Uterus (tissue), 4 donors: ENCODE measurements at regions of chr16 and their contacts with region 1.

Region 1: GRCh38 chr16:11639925-11640899 is 28.0 kb upstream of the SNN start:
- DNase-seq: peak; percentile 88 to 93
- H3K4me3 ChIP-seq: no peak overlapping the region
- H3K27ac ChIP-seq: peak overlapping the region; percentile 88 to 96
- H3K4me1 ChIP-seq: peaks cover 0 to 5% of the 10 kb centered on the region in 2 donors
- H3K27me3 ChIP-seq: no peaks in the 10 kb centered on the region
- CTCF ChIP-seq: no peak
- POLR2A ChIP-seq: peak; percentile 47 to 63

Region 2: GRCh38 chr16:11407047-11407982 is 232.9 kb before region 1 on chr16:
- intact Hi-C with region 1: loop called (anchors 10 kb)
- DNase-seq: peak; percentile 60 to 69
- H3K4me3 ChIP-seq: no peak overlapping the region
- H3K27ac ChIP-seq: no peak overlapping the region
- H3K4me1 ChIP-seq: no peaks in the 10 kb centered on the region
- H3K27me3 ChIP-seq: no peaks in the 10 kb centered on the region
- CTCF ChIP-seq: peak; percentile 53 to 88 (median 62)
- POLR2A ChIP-seq: no peak

Region 3: DNA sequence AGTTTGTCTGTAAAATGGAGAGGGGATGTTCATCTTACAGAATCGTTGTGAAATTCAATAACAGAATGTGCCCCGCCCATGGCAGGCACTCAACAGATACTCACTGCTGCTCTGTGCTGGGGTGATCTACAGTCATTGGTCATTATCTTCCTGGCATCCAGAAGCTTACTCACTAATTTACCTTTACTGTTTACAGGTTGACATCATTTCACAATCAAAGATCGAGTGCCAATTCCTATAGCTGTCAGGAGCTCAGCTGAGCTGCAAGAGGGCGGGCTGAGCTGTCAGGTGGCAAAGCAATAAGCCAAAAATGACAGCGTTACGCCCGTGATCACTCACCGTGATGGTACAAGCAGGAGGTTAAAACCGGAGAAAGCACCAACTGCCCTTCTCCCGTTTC is 104.7 kb before region 1 on chr16:
- intact Hi-C with region 1: loop called (anchors 10 kb)
- DNase-seq: no peak
- H3K4me3 ChIP-seq: no peak overlapping the region
- H3K27ac ChIP-seq: no peak overlapping the region
- H3K4me1 ChIP-seq: no peaks in the 10 kb centered on the region
- H3K27me3 ChIP-seq: no peaks in the 10 kb centered on the region
- CTCF ChIP-seq: no peak
- POLR2A ChIP-seq: no peak

Region 4: GRCh38 chr16:11682655-11683096 is 42.5 kb after region 1 on chr16:
- intact Hi-C with region 1: no loop called
- DNase-seq: no peak
- H3K4me3 ChIP-seq: no peak overlapping the region
- H3K27ac ChIP-seq: peak overlapping the region; percentile 33 to 61
- H3K4me1 ChIP-seq: peaks cover 3 to 6% of the 10 kb centered on the region in 2 donors
- H3K27me3 ChIP-seq: no peaks in the 10 kb centered on the region
- CTCF ChIP-seq: no peak
- POLR2A ChIP-seq: no peak